Activated B cell treated with CpG ODN at 0.5 μM for 24 hours (primary cell): ENCODE measurements at regions of chr10 and their contacts with region 1.

Region 1: GRCh38 chr10:31318854-31319601 is at the start of gene ZEB1:
- DNase-seq: peak; percentile 80
- ATAC-seq: peak; percentile 53
- H3K4me3 Mint-ChIP-seq: peak within 1 kb of the TSS; percentile 96
- H3K27ac Mint-ChIP-seq: peak within 1 kb of the TSS; percentile 98
- H3K4me1 Mint-ChIP-seq: peaks cover 34% of the 10 kb centered on the region
- H3K27me3 Mint-ChIP-seq: no peaks in the 10 kb centered on the region
- CTCF ChIP-seq: no peak
- total RNA-seq, gene ZEB1: 38.4 and 43.0 TPM in 2 replicates

Region 2: DNA sequence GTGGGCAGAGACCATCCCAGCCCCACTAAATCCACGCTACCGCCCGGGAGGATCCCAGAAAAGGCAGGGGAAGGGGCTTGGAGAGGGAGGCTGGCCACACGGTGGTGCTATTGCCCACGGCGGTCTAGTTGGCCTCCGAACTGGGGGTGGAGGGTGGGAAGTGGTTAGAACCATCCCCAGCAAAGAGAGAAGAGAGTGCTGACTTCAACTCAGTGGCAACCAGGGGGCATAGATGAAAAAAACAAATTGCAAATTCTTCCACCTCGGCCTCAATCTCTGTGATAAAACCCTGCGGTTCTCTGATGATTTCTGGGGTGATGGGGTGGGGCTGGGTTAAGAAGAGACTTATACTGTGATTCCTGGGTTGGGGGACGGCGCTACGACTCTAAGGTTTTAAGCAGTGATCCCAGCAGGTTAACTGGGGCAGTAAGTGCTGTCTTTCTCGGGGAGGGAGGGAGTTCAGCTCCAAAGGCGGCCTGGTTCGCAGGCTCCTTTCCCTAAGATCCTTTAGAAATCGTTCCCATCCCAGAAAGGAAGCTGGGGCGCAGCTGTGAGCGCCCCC is 535.0 kb before region 1 on chr10:
- CTCF ChIA-PET with region 1: no interaction called
- POLR2A ChIA-PET with region 1: no interaction called
- intact Hi-C with region 1: loop called (anchors 1 kb)
- DNase-seq: peak; percentile 61
- ATAC-seq: peak; percentile 86
- H3K4me3 Mint-ChIP-seq: peak overlapping the region; percentile 81
- H3K27ac Mint-ChIP-seq: no peak overlapping the region
- H3K4me1 Mint-ChIP-seq: peaks cover 11% of the 10 kb centered on the region
- H3K27me3 Mint-ChIP-seq: peaks cover 14% of the 10 kb centered on the region
- CTCF ChIP-seq: peak; percentile 60

Region 3: DNA sequence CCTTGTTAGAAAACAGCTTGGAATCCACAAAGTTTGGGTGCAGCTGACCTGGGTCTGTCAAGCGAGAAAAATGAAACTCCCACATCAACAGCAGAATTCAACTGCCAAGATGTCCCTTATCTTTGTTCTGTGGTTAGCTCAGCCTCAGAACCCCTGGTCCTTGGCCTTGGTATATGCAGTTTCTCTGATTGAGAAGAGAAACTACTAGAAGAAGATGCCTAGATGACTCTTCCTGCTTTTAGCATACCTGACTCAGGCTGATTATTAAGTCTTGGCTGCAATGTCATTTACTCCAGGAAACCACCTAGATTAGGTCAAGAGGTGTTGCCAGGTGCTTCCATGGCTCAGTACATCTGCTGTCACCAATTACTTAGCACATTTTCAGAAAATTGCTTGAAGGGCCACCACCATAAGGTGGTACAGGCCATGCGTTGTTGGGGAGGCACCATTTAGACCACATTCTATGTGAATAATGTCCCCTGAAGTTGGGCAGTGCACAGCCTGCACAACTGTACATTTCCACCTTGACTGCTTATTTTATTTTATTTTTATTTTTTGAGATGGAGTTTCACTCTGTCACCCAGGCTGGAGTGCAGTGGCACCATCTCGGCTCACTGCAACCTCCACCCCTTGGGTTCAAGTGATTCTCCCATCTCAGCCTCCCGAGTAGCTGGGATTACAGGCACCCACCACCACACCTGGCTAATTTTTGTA is 228.0 kb before region 1 on chr10:
- CTCF ChIA-PET with region 1: no interaction called
- POLR2A ChIA-PET with region 1: interaction called, 4 read pairs
- intact Hi-C with region 1: loop called (anchors 2 kb)
- DNase-seq: no peak
- ATAC-seq: peak; percentile 89
- H3K4me3 Mint-ChIP-seq: peak overlapping the region; percentile 2
- H3K27ac Mint-ChIP-seq: peak overlapping the region; percentile 64
- H3K4me1 Mint-ChIP-seq: peaks cover 13% of the 10 kb centered on the region
- H3K27me3 Mint-ChIP-seq: no peaks in the 10 kb centered on the region
- CTCF ChIP-seq: no peak

Region 4: DNA sequence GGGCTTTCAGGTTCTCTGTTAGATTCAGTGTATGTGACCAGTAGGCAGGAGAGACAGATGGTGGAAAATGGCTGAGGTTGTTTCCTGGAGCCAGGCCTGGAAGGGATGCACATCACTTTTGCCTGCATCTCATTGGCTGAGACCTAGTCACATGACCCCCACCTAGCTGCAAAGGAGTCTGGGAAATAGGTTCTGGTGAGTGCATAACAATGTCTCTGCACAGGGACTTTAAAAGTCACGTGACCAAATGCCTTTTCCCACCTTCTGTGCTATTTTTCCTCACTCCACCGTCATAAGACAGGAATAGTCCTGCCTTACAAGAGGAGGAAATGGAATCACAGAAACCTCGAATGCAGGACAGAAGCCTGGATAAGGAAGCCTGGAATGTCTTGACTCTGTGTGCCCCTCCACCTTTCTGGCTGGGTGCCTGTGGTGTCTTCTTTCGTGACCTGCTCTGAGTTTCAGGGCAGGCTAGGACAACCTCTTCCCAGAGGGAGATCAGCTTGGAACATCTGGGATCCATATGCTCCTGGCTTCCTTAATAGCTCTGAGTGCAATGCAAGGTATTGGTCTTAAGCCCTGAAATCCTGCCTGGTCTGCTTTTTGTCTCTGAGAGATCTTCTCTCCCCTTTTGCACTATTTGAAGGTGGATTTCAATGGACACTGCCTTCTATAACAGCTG is 147.5 kb before region 1 on chr10:
- CTCF ChIA-PET with region 1: no interaction called
- POLR2A ChIA-PET with region 1: no interaction called
- intact Hi-C with region 1: no loop called
- DNase-seq: no peak
- ATAC-seq: no peak
- H3K4me3 Mint-ChIP-seq: no peak overlapping the region
- H3K27ac Mint-ChIP-seq: no peak overlapping the region
- H3K4me1 Mint-ChIP-seq: no peaks in the 10 kb centered on the region
- H3K27me3 Mint-ChIP-seq: peaks cover 2% of the 10 kb centered on the region
- CTCF ChIP-seq: no peak

Region 5: GRCh38 chr10:31353574-31353973 is 34.5 kb after region 1 on chr10:
- CTCF ChIA-PET with region 1: interaction called, 3 read pairs
- POLR2A ChIA-PET with region 1: interaction called, 4 read pairs
- intact Hi-C with region 1: loop called (anchors 1 kb)
- DNase-seq: no peak
- ATAC-seq: peak; percentile 81
- H3K4me3 Mint-ChIP-seq: no peak overlapping the region
- H3K27ac Mint-ChIP-seq: no peak overlapping the region
- H3K4me1 Mint-ChIP-seq: peaks cover 47% of the 10 kb centered on the region
- H3K27me3 Mint-ChIP-seq: no peaks in the 10 kb centered on the region
- CTCF ChIP-seq: no peak

Region 6: DNA sequence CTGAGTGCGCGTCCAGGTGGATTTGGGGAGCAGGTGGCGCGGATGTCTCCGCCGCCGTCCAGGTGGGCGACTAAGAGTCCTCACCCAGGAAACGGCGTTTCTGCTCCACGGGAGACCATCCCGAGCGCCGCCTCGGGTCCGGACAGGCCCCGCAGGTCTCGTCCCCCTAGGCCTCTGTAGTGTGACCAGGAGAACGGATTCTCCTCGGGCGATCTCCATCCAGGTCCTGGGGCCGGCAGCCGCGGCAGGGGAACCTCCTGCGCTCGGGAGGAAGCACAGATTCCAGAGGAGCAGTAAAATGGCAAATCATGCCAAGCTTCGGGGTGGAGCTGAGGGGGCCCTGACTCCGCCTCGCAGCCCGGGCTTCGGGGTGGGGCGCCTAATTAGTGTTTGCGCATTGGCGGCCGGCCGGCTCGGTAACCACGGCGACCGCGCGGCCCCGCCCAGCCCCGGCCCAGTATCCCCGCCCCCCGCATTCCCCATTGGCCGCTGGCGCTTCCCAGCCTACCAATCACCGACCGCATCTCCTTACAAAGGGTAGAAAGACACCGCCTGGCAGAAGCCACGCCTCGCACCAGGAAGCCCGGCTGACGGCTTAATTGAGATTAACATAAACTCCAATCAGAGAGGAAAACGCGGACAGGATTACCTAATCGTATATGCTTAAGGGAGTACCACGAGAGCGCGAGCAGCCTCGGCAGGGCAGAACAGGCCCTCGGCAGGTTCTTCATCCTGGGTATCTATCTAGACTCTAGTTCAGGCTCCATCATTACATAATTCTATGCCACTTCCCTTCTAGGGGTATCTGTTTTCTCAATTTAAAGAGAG is 441.0 kb after region 1 on chr10:
- CTCF ChIA-PET with region 1: no interaction called
- POLR2A ChIA-PET with region 1: interaction called, 6 read pairs
- intact Hi-C with region 1: loop called (anchors 1 kb)
- DNase-seq: peak; percentile 85
- ATAC-seq: peak; percentile 94
- H3K4me3 Mint-ChIP-seq: peak overlapping the region; percentile 85
- H3K27ac Mint-ChIP-seq: peak overlapping the region; percentile 91
- H3K4me1 Mint-ChIP-seq: peaks cover 13% of the 10 kb centered on the region
- H3K27me3 Mint-ChIP-seq: no peaks in the 10 kb centered on the region
- CTCF ChIP-seq: no peak

Region 7: DNA sequence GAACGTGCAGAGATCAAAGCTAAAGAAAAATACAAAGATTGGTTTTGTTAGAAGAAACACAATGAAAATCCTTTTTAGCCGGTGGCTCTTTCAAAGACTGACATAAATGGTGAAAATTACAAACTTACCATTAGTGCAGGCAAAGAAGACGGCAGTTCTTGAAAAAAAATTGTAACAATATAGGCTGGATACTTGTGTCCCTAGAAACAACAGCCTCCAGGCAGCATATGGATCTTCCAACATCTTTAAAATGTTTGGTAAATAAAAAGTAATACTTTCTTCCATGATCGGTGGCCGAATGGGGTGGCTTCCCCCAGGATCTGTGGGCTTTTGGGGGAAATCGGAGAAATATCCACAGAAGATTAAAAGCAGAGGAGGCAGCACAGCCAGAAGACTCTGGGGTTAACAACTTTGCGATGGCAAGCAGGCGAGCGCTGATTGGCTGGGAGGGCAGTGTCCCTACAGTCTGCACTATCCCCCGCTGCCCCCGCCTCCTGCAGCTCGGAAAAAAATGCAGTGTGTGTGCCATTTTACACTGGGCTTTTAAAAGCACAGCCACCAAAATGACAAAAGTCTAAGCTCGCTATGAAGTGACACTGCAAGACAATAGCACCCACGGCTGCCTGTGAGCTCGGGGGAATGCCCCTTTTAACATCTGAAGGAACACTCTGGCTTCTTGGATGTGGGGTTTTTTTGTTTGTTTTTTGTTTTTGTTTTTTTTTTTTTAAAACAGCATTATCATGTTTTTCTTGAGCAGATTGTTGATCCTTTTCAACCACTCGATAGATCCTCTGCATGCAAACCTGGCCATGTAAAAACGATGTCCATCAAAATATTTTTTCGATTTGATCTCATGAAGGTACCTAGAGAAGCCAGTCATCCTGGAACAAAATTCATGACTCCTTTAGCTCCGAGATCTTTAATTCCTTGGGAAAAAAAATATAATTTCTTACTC is 1059.6 kb after region 1 on chr10:
- CTCF ChIA-PET with region 1: no interaction called
- POLR2A ChIA-PET with region 1: no interaction called
- intact Hi-C with region 1: loop called (anchors 10 kb)
- DNase-seq: peak; percentile 73
- ATAC-seq: peak; percentile 94
- H3K4me3 Mint-ChIP-seq: no peak overlapping the region
- H3K27ac Mint-ChIP-seq: no peak overlapping the region
- H3K4me1 Mint-ChIP-seq: peaks cover 21% of the 10 kb centered on the region
- H3K27me3 Mint-ChIP-seq: no peaks in the 10 kb centered on the region
- CTCF ChIP-seq: no peak

Region 8: DNA sequence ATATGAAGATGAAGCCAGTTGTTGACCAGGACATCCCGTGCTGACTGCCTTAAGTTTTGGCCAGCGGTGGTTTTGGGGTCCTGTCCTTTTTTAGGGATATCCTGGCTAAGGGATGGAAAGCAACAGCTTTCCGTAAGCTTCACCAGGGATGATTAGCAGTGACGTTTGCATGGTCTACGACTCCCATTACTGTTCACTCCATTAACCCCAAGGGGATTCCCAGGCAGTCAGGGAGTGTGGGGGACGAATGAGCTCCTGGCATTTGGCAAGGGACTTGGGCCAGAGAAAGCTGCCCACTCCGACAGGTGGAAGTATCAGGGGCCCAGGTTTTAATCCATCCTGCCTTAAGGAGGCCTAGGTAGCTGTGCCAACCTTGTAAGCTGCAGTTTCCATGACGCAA is 1572.2 kb after region 1 on chr10:
- CTCF ChIA-PET with region 1: no interaction called
- POLR2A ChIA-PET with region 1: no interaction called
- intact Hi-C with region 1: no loop called
- DNase-seq: no peak
- ATAC-seq: no peak
- H3K4me3 Mint-ChIP-seq: no peak overlapping the region
- H3K27ac Mint-ChIP-seq: no peak overlapping the region
- H3K4me1 Mint-ChIP-seq: peaks cover 2% of the 10 kb centered on the region
- H3K27me3 Mint-ChIP-seq: no peaks in the 10 kb centered on the region
- CTCF ChIP-seq: no peak

Region 9: GRCh38 chr10:32905466-32905865 is 1586.4 kb after region 1 on chr10:
- CTCF ChIA-PET with region 1: no interaction called
- POLR2A ChIA-PET with region 1: no interaction called
- intact Hi-C with region 1: no loop called
- DNase-seq: no peak
- ATAC-seq: no peak
- H3K4me3 Mint-ChIP-seq: no peak overlapping the region
- H3K27ac Mint-ChIP-seq: no peak overlapping the region
- H3K4me1 Mint-ChIP-seq: no peaks in the 10 kb centered on the region
- H3K27me3 Mint-ChIP-seq: no peaks in the 10 kb centered on the region
- CTCF ChIP-seq: no peak